ENCODE measurements at regions of chr6 and their contacts with region 1.

Region 1: DNA sequence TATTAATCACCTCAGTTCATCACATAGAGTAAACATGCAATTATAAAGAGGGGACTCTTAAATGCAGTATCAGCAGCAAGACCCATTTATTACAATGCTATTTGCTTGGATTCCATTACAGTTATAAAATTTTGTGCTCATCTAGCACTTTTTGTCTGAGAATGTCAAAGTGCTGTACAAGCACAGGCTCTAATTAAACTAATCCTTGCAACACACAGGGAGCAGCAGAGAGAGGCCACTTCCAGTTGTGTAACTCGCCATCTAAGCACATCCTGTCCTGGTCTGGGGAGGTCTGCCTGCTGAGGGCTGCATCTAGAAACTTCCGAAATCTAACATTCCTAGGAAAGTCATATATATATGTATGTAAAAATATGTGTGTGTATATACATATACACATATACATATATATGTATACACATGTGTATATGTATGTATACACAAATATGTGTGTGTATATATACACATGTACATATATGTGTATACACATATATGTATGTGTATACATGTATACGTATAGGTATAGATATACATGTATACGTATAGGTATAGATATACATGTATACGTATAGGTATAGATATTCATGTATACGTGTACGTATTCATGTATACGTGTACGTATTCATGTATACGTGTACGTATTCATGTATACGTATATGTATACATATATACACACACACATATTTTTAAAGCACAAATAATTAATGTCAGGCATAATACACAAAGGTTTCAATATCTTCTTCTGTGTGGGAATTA is 136.4 kb upstream of the JARID2 start:
- DNase-seq: peak; percentile 85
- H3K4me3 ChIP-seq: no peak overlapping the region
- H3K27ac ChIP-seq: peak overlapping the region; percentile 100
- H3K4me1 ChIP-seq: peaks cover 52% of the 10 kb centered on the region
- H3K27me3 ChIP-seq: no peaks in the 10 kb centered on the region
- CTCF ChIP-seq: no peak

Region 2: GRCh38 chr6:13908955-13909381 is 1200.5 kb before region 1 on chr6:
- CTCF ChIA-PET with region 1: no interaction called
- POLR2A ChIA-PET with region 1: no interaction called
- intact Hi-C with region 1: loop called (anchors 2 kb)
- DNase-seq: peak; percentile 88
- H3K4me3 ChIP-seq: no peak overlapping the region
- H3K27ac ChIP-seq: peak overlapping the region; percentile 82
- H3K4me1 ChIP-seq: peaks cover 37% of the 10 kb centered on the region
- H3K27me3 ChIP-seq: no peaks in the 10 kb centered on the region
- CTCF ChIP-seq: peak; percentile 78

Region 3: GRCh38 chr6:14381829-14382677 is 727.5 kb before region 1 on chr6:
- CTCF ChIA-PET with region 1: interaction called, 4 read pairs
- POLR2A ChIA-PET with region 1: interaction called, 3 read pairs
- intact Hi-C with region 1: loop called (anchors 1 kb)
- DNase-seq: peak; percentile 54
- H3K4me3 ChIP-seq: peak overlapping the region; percentile 8
- H3K27ac ChIP-seq: peak overlapping the region; percentile 97
- H3K4me1 ChIP-seq: peaks cover 61% of the 10 kb centered on the region
- H3K27me3 ChIP-seq: no peaks in the 10 kb centered on the region
- CTCF ChIP-seq: no peak

Region 4: DNA sequence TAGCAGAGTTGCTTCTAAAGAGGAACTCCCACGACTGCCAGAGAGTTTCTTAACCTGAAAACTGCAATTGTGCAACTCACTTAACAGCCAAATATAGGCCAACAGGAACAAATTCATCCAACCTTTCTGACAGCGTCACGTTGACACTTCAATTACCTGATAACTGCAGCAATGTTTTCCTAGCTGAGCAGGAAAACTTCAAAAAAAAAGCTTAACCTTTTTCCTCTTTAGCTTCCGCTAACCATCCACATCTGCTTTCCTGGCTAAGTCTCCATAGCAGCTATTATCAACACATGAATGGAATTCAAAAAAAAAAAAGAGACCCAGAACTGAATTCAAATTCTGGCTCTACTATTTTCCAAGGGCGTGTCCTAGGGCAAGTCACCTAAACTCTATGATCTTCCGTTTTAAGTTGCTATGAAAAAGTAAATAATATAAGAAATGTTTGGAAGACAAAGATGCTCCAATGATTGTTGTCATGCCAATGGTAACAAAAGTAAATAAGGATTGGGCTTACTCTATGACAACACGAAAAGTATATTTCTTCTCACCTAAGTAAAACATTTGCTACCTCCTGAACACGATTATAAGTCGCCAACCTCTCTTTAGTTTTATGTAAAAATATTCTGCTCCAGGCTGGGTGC is 388.3 kb before region 1 on chr6:
- CTCF ChIA-PET with region 1: no interaction called
- POLR2A ChIA-PET with region 1: no interaction called
- intact Hi-C with region 1: no loop called
- DNase-seq: no peak
- H3K4me3 ChIP-seq: no peak overlapping the region
- H3K27ac ChIP-seq: no peak overlapping the region
- H3K4me1 ChIP-seq: peaks cover 9% of the 10 kb centered on the region
- H3K27me3 ChIP-seq: no peaks in the 10 kb centered on the region
- CTCF ChIP-seq: no peak

Region 5: GRCh38 chr6:14876778-14877613 is 232.5 kb before region 1 on chr6:
- CTCF ChIA-PET with region 1: no interaction called
- POLR2A ChIA-PET with region 1: no interaction called
- intact Hi-C with region 1: loop called (anchors 2 kb)
- DNase-seq: peak; percentile 98
- H3K4me3 ChIP-seq: peak overlapping the region; percentile 25
- H3K27ac ChIP-seq: peak overlapping the region; percentile 96
- H3K4me1 ChIP-seq: peaks cover 63% of the 10 kb centered on the region
- H3K27me3 ChIP-seq: no peaks in the 10 kb centered on the region
- CTCF ChIP-seq: no peak

Region 6: GRCh38 chr6:15152700-15153099 is 43.2 kb after region 1 on chr6:
- CTCF ChIA-PET with region 1: no interaction called
- POLR2A ChIA-PET with region 1: no interaction called
- intact Hi-C with region 1: no loop called
- DNase-seq: no peak
- H3K4me3 ChIP-seq: no peak overlapping the region
- H3K27ac ChIP-seq: no peak overlapping the region
- H3K4me1 ChIP-seq: no peaks in the 10 kb centered on the region
- H3K27me3 ChIP-seq: no peaks in the 10 kb centered on the region
- CTCF ChIP-seq: no peak

Region 7: GRCh38 chr6:15245361-15246216 is 136.1 kb after region 1 on chr6 and contains the start of gene JARID2:
- CTCF ChIA-PET with region 1: no interaction called
- POLR2A ChIA-PET with region 1: no interaction called
- intact Hi-C with region 1: loop called (anchors 5 kb)
- DNase-seq: peak; percentile 99
- H3K4me3 ChIP-seq: peak within 1 kb of the TSS; percentile 71
- H3K27ac ChIP-seq: peak within 1 kb of the TSS; percentile 96
- H3K4me1 ChIP-seq: peaks cover 18% of the 10 kb centered on the region
- H3K27me3 ChIP-seq: no peaks in the 10 kb centered on the region
- CTCF ChIP-seq: no peak
- total RNA-seq, gene JARID2: 29.4 and 34.1 TPM in 2 replicates

Region 8: GRCh38 chr6:15439410-15440025 is 330.0 kb after region 1 on chr6:
- CTCF ChIA-PET with region 1: no interaction called
- POLR2A ChIA-PET with region 1: no interaction called
- intact Hi-C with region 1: loop called (anchors 5 kb)
- DNase-seq: peak; percentile 98
- H3K4me3 ChIP-seq: no peak overlapping the region
- H3K27ac ChIP-seq: peak overlapping the region; percentile 20
- H3K4me1 ChIP-seq: peaks cover 81% of the 10 kb centered on the region
- H3K27me3 ChIP-seq: peaks cover 20% of the 10 kb centered on the region
- CTCF ChIP-seq: no peak

Region 9: GRCh38 chr6:15621203-15622044 is 511.9 kb after region 1 on chr6:
- CTCF ChIA-PET with region 1: interaction called, 3 read pairs
- POLR2A ChIA-PET with region 1: interaction called, 6 read pairs
- intact Hi-C with region 1: loop called (anchors 2 kb)
- DNase-seq: peak; percentile 37
- H3K4me3 ChIP-seq: no peak overlapping the region
- H3K27ac ChIP-seq: peak overlapping the region; percentile 83
- H3K4me1 ChIP-seq: peaks cover 80% of the 10 kb centered on the region
- H3K27me3 ChIP-seq: no peaks in the 10 kb centered on the region
- CTCF ChIP-seq: no peak